ENCODE measurements at regions of chr7 and their contacts with region 1.

Region 1: DNA sequence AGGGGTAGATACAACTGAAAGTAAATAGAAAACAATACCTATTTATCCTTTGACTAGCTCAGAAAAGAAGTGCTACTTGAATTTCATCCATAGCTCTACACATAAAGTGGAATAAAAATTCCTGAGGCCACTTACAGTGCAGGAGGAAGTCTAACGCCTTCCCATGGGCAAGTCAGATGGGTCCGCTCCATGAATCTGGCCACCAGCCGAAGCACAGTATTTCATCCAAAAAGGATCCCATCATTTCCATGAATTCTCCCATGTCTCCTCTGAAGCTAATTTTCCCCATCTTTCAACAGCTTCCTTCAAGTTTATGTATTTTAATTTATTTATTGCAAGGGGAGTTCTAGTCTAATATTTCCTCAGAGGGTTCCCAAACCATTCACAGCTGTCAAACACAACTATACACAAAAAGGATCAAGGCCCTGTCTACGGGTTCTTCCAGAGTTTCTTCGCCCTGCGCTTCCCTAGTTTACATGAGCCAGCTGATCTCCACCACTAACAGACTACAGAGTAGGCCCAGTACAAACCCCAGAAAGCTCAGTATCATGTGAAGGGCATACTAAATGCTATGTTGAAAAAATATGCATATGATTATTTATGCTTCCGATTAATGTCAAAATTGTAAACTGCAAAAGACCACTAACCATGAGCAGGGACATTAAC is 184.7 kb downstream of the DOCK4 start:
- DNase-seq: no peak
- CTCF ChIP-seq: no peak

Region 2: GRCh38 chr7:112031689-112032088 is 10.2 kb after region 1 on chr7:
- CTCF ChIA-PET with region 1: interaction called, 12 read pairs
- POLR2A ChIA-PET with region 1: no interaction called
- DNase-seq: no peak
- CTCF ChIP-seq: no peak

Region 3: GRCh38 chr7:112045222-112045621 is 23.7 kb after region 1 on chr7:
- CTCF ChIA-PET with region 1: interaction called, 10 read pairs
- POLR2A ChIA-PET with region 1: no interaction called
- DNase-seq: no peak
- CTCF ChIP-seq: no peak

Measured in GM10248 (cell line).